ENCODE measurements at regions of chr17 and their contacts with region 1.

Region 1: DNA sequence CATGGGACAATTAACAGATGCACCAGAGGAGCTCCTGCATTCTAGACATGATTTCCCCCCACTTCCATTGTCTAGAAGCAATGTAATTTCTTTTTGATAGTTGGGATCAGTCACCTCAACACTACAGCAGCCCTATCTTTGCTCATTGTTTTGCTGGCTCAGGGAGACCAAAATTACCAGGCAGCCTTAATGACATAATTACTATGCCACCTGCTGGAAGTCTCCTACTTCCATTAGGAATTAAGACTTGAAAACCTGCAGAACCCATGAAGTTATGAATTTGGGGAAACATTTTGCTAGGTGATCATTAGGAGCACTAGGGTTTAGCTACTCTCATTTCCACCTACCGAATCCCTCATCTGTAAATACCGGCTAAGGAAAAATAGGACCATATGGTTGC is 312.0 kb upstream of the CA10 start:
- DNase-seq: no peak
- H3K4me3 Mint-ChIP-seq: no peak overlapping the region
- H3K27ac Mint-ChIP-seq: no peak overlapping the region
- H3K4me1 Mint-ChIP-seq: no peaks in the 10 kb centered on the region
- H3K27me3 Mint-ChIP-seq: peaks cover 12% of the 10 kb centered on the region
- CTCF ChIP-seq: no peak

Region 2: GRCh38 chr17:52383493-52384100 is 87.0 kb before region 1 on chr17:
- CTCF ChIA-PET with region 1: interaction called, 11 read pairs
- POLR2A ChIA-PET with region 1: no interaction called
- intact Hi-C with region 1: no loop called
- DNase-seq: peak; percentile 75
- H3K4me3 Mint-ChIP-seq: no peak overlapping the region
- H3K27ac Mint-ChIP-seq: no peak overlapping the region
- H3K4me1 Mint-ChIP-seq: peaks cover 6% of the 10 kb centered on the region
- H3K27me3 Mint-ChIP-seq: peaks cover 61% of the 10 kb centered on the region
- CTCF ChIP-seq: peak; percentile 82

Region 3: GRCh38 chr17:52721910-52722309 is 251.4 kb after region 1 on chr17:
- CTCF ChIA-PET with region 1: no interaction called
- POLR2A ChIA-PET with region 1: no interaction called
- intact Hi-C with region 1: no loop called
- DNase-seq: no peak
- H3K4me3 Mint-ChIP-seq: no peak overlapping the region
- H3K27ac Mint-ChIP-seq: no peak overlapping the region
- H3K4me1 Mint-ChIP-seq: no peaks in the 10 kb centered on the region
- H3K27me3 Mint-ChIP-seq: peaks cover 68% of the 10 kb centered on the region
- CTCF ChIP-seq: no peak

Measured in MCF 10A (cell line).